MCF 10A (cell line): ENCODE measurements at regions of chr5 and their contacts with region 1.

Region 1: GRCh38 chr5:148740966-148741742 is 85.3 kb upstream of the ADRB2 start:
- DNase-seq: peak; percentile 77
- H3K4me3 Mint-ChIP-seq: no peak overlapping the region
- H3K27ac Mint-ChIP-seq: no peak overlapping the region
- H3K4me1 Mint-ChIP-seq: peaks cover 5% of the 10 kb centered on the region
- H3K27me3 Mint-ChIP-seq: no peaks in the 10 kb centered on the region
- CTCF ChIP-seq: peak; percentile 88

Region 2: DNA sequence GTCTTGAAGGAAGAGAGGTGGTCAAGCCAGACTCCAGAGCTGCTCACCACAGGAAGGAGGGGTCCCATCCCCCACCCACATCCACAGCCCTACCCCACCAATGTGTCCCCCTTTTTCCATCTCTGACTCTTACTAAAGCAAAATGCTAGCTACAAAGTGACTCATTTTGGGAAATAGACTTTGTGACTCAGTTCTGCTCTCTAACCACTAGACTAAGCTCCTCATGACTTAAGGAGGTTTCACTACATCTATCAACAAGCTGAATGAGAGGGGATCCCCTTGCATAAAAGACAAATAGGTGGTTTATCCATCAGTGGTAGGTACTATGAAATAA is 50.1 kb after region 1 on chr5:
- CTCF ChIA-PET with region 1: interaction called, 26 read pairs
- POLR2A ChIA-PET with region 1: interaction called, 3 read pairs
- intact Hi-C with region 1: no loop called
- DNase-seq: peak; percentile 66
- H3K4me3 Mint-ChIP-seq: no peak overlapping the region
- H3K27ac Mint-ChIP-seq: peak overlapping the region; percentile 88
- H3K4me1 Mint-ChIP-seq: peaks cover 60% of the 10 kb centered on the region
- H3K27me3 Mint-ChIP-seq: no peaks in the 10 kb centered on the region
- CTCF ChIP-seq: no peak

Region 3: GRCh38 chr5:148826053-148826738 is 85.0 kb after region 1 on chr5 and contains the start of gene ADRB2:
- CTCF ChIA-PET with region 1: interaction called, 142 read pairs
- POLR2A ChIA-PET with region 1: interaction called, 69 read pairs
- intact Hi-C with region 1: loop called (anchors 1 kb)
- DNase-seq: peak; percentile 99
- H3K4me3 Mint-ChIP-seq: peak within 1 kb of the TSS; percentile 90
- H3K27ac Mint-ChIP-seq: peak within 1 kb of the TSS; percentile 91
- H3K4me1 Mint-ChIP-seq: peaks cover 44% of the 10 kb centered on the region
- H3K27me3 Mint-ChIP-seq: no peaks in the 10 kb centered on the region
- CTCF ChIP-seq: no peak
- total RNA-seq, gene ADRB2: 6.9 and 9.5 TPM in 2 replicates

Region 4: GRCh38 chr5:148864113-148864841 is 123.1 kb after region 1 on chr5:
- CTCF ChIA-PET with region 1: interaction called, 15 read pairs
- POLR2A ChIA-PET with region 1: no interaction called
- intact Hi-C with region 1: no loop called
- DNase-seq: no peak
- H3K4me3 Mint-ChIP-seq: no peak overlapping the region
- H3K27ac Mint-ChIP-seq: no peak overlapping the region
- H3K4me1 Mint-ChIP-seq: no peaks in the 10 kb centered on the region
- H3K27me3 Mint-ChIP-seq: no peaks in the 10 kb centered on the region
- CTCF ChIP-seq: no peak

Region 5: DNA sequence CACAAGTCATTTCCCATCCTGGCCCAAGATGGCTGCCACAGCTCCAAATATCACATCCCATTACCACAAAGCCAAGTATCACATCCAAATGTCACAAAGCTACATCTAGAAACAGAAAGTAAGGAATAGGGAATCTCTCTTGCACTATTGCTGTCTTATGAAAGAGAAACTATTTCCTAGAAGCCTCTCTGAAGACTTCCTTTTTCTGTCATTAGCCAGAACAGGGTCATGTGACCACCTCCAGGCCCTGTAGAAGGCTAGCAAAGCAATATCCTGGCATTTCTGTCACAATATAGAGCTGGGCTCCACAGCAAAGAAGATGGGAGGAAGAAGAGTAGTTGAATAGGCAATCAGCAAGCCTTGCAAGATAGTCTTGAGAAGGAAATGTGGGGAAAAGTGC is 222.5 kb after region 1 on chr5:
- CTCF ChIA-PET with region 1: interaction called, 120 read pairs
- POLR2A ChIA-PET with region 1: interaction called, 4 read pairs
- intact Hi-C with region 1: no loop called
- DNase-seq: no peak
- H3K4me3 Mint-ChIP-seq: no peak overlapping the region
- H3K27ac Mint-ChIP-seq: peak overlapping the region; percentile 57
- H3K4me1 Mint-ChIP-seq: peaks cover 58% of the 10 kb centered on the region
- H3K27me3 Mint-ChIP-seq: no peaks in the 10 kb centered on the region
- CTCF ChIP-seq: no peak

Region 6: DNA sequence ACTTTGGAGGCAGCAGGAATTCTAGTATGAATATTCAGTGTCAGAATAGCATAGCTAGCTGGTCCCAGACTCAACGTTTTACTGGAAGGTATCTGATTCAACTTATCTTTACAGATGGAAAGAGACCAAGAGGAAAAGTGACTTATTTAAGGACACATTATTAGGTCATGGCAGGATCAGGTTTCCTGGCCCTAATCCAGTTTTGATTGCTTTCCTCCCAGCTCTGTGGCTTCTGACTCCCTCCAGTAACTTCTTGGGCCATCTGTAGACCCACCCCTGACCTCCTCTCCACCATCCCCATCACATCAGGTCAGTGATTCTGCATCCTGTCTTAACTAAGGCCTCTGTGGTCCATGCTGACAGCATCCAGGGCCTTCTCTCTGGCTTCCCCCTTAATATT is 283.3 kb after region 1 on chr5:
- CTCF ChIA-PET with region 1: interaction called, 882 read pairs
- POLR2A ChIA-PET with region 1: no interaction called
- intact Hi-C with region 1: no loop called
- DNase-seq: peak; percentile 39
- H3K4me3 Mint-ChIP-seq: no peak overlapping the region
- H3K27ac Mint-ChIP-seq: no peak overlapping the region
- H3K4me1 Mint-ChIP-seq: peaks cover 16% of the 10 kb centered on the region
- H3K27me3 Mint-ChIP-seq: no peaks in the 10 kb centered on the region
- CTCF ChIP-seq: no peak